Heart right ventricle (tissue), 16 donors: ENCODE measurements at regions of chr11 and their contacts with region 1.

Region 1: GRCh38 chr11:117217141-117218084 is 14.5 kb downstream of the PCSK7 start:
- DNase-seq: peak in 1 of 2 donors; percentile 7
- ATAC-seq: no peak
- H3K4me3 ChIP-seq: no peak overlapping the region
- H3K27ac ChIP-seq: peak overlapping the region; percentile 64 to 97 (median 88)
- H3K4me1 ChIP-seq: peaks cover 32 to 65% (median 51%) of the 10 kb centered on the region in 9 donors
- H3K27me3 ChIP-seq: no peaks in the 10 kb centered on the region
- CTCF ChIP-seq: no peak

Region 2: DNA sequence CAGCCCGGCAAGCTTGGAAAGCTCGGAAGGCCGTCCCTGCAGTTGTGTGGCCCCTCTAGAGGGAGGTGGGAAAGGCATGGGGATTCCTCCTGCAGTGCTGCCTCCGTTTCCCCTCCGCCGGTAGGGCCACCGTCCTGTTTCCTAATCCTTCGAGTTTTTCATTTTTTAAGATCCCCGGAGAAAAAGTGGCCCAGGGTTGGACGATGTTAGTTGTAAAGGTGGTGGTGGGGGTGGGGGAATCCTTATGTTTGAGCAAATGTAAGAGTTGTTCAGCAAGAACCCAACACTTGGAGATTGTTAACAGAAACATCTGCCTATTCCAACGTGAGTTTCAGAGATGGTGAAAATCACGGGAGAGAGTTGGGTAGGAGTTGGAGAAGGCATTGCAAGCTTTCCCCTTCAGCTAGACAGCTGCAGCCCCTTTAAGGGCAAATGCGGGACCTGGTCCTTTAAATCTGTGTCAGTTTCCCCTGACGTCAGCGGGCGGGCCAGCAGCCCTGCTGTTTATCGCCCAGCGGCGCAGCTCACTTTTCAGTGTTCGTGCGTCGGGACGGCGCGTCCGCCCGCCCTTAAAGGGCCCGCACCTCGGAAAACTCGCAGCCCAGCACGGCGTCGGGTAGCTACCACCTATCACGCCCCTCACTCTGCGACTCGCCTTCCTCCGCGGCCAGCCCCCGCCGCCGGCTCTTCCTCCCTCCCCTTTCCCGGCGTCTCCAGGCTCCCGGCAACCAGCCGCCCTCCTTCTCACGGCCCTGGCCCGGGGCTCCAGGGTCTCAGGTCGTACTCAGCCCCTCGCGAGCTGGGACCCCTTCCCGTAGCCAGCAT is 39.0 kb before region 1 on chr11 and contains the start of gene SIDT2:
- intact Hi-C with region 1: loop called in 6 of 10 experiments (anchors 2 to 5 kb)
- DNase-seq: peak; percentile 94 to 96
- ATAC-seq: peak; percentile 93 to 97 (median 96)
- H3K4me3 ChIP-seq: peak within 1 kb of the TSS; percentile 80 to 100 (median 89)
- H3K27ac ChIP-seq: peak within 1 kb of the TSS; percentile 81 to 98 (median 96)
- H3K4me1 ChIP-seq: peaks cover 14 to 41% (median 32%) of the 10 kb centered on the region in 9 donors
- H3K27me3 ChIP-seq: no peaks in the 10 kb centered on the region
- CTCF ChIP-seq: peak in 1 of 9 donors; percentile 5
- total RNA-seq, gene SIDT2: 16.2 to 33.6 (median 22.0) TPM